ENCODE measurements at regions of chr3 and their contacts with region 1.

Region 1: GRCh38 chr3:136858381-136858780 is 3.6 kb upstream of the NCK1 start:
- DNase-seq: no peak
- H3K4me3 ChIP-seq: no peak overlapping the region
- H3K27ac ChIP-seq: no peak overlapping the region
- H3K4me1 ChIP-seq: peaks cover 9 to 28% of the 10 kb centered on the region in 2 donors
- H3K27me3 ChIP-seq: no peaks in the 10 kb centered on the region
- CTCF ChIP-seq: no peak
- POLR2A ChIP-seq: no peak

Region 2: DNA sequence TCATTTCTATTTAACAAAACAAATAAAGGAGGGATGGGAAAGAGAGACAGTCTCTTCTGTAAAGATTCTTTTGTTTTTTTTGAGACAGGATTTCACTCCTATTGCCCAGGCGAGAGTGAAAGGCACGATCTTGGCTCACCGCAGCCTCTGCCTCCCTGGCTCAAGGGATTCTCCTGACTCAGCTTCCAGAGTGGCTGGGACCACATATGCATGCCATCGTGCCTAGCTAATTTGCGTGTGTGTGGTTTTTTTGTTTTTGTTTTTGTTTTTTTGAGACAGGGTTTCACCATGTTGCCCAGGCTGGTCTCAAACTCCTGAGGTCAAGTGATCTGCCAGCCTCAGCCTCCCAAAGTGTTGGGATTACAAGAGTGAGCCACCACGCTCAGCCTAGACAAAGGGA is 129.5 kb before region 1 on chr3:
- intact Hi-C with region 1: no loop called
- DNase-seq: peak in 3 of 7 donors; percentile 39 to 46 (median 42)
- H3K4me3 ChIP-seq: no peak overlapping the region
- H3K27ac ChIP-seq: no peak overlapping the region
- H3K4me1 ChIP-seq: peaks cover 0 to 41% of the 10 kb centered on the region in 2 donors
- H3K27me3 ChIP-seq: no peaks in the 10 kb centered on the region
- CTCF ChIP-seq: no peak
- POLR2A ChIP-seq: no peak

Region 3: DNA sequence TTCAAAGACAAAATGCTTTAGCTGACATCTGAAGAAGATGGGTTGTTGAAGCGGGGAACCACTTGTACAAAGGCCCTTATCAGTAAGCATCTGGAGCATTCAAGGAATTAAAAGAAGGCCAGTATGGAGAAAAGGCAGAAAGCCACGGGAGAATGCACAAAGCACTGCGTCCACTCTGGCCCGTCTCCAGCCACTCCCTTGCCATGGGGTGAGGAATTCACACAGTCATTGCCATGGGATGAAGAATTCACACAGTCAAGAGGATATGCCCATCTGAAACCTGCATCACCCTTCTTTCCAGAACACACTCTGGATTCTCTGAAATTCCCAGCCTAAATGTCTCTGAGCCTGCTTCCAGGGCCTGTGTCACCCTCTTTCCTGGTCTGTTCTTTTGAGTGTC is 79.5 kb before region 1 on chr3:
- intact Hi-C with region 1: no loop called
- DNase-seq: no peak
- H3K4me3 ChIP-seq: no peak overlapping the region
- H3K27ac ChIP-seq: no peak overlapping the region
- H3K4me1 ChIP-seq: no peaks in the 10 kb centered on the region
- H3K27me3 ChIP-seq: no peaks in the 10 kb centered on the region
- CTCF ChIP-seq: no peak
- POLR2A ChIP-seq: no peak

Region 4: GRCh38 chr3:137013955-137014688 is 155.7 kb after region 1 on chr3:
- intact Hi-C with region 1: loop called in 1 of 2 experiments (anchors 5 kb)
- DNase-seq: peak; percentile 88 to 97 (median 93)
- H3K4me3 ChIP-seq: peak overlapping the region in 3 of 4 donors; percentile 6 to 77 (median 40)
- H3K27ac ChIP-seq: peak overlapping the region in 4 of 5 donors; percentile 70 to 87 (median 81)
- H3K4me1 ChIP-seq: peaks cover 0 to 3% of the 10 kb centered on the region in 2 donors
- H3K27me3 ChIP-seq: no peaks in the 10 kb centered on the region
- CTCF ChIP-seq: peak; percentile 85 to 98 (median 95)
- POLR2A ChIP-seq: no peak